Calu3 (cell line): ENCODE measurements at regions of chr19 and their contacts with region 1.

Region 1: DNA sequence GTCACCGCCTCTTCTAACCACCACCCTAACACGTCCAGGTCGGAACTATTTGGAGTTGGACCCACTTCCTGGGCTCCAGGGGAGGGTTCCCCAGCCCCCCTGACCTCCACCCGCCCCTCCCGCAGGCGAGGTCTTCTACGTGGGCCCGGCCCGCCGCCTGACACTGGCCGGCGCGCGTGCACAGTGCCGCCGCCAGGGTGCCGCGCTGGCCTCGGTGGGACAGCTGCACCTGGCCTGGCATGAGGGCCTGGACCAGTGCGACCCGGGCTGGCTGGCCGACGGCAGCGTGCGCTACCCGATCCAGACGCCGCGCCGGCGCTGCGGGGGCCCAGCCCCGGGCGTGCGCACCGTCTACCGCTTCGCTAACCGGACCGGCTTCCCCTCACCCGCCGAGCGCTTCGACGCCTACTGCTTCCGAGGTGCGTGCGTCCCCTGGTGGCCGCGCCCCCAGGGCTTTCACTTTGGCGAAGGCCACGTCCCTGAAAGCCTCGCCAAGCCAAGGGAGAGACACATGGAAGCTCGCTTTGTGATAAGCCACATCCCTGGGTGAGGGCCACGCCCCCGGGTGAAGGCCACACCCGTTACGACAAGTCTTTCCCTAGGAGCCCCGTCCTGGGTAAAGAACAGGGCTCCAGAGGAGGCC is 13.2 kb downstream of the NCAN start:
- DNase-seq: peak; percentile 81
- H3K4me3 Mint-ChIP-seq: peak overlapping the region; percentile 60
- H3K27ac Mint-ChIP-seq: no peak overlapping the region
- H3K4me1 Mint-ChIP-seq: no peaks in the 10 kb centered on the region
- H3K27me3 Mint-ChIP-seq: peaks cover 40% of the 10 kb centered on the region
- CTCF ChIP-seq: peak; percentile 79

Region 2: GRCh38 chr19:17419621-17420466 is 1805.1 kb before region 1 on chr19 and contains the start of gene MVB12A:
- CTCF ChIA-PET with region 1: interaction called, 14 read pairs
- intact Hi-C with region 1: no loop called
- DNase-seq: peak; percentile 92
- H3K4me3 Mint-ChIP-seq: peak within 1 kb of the TSS; percentile 78
- H3K27ac Mint-ChIP-seq: peak within 1 kb of the TSS; percentile 64
- H3K4me1 Mint-ChIP-seq: no peaks in the 10 kb centered on the region
- H3K27me3 Mint-ChIP-seq: no peaks in the 10 kb centered on the region
- CTCF ChIP-seq: no peak
- total RNA-seq, gene MVB12A: 35.6 and 41.1 TPM in 2 replicates

Region 3: DNA sequence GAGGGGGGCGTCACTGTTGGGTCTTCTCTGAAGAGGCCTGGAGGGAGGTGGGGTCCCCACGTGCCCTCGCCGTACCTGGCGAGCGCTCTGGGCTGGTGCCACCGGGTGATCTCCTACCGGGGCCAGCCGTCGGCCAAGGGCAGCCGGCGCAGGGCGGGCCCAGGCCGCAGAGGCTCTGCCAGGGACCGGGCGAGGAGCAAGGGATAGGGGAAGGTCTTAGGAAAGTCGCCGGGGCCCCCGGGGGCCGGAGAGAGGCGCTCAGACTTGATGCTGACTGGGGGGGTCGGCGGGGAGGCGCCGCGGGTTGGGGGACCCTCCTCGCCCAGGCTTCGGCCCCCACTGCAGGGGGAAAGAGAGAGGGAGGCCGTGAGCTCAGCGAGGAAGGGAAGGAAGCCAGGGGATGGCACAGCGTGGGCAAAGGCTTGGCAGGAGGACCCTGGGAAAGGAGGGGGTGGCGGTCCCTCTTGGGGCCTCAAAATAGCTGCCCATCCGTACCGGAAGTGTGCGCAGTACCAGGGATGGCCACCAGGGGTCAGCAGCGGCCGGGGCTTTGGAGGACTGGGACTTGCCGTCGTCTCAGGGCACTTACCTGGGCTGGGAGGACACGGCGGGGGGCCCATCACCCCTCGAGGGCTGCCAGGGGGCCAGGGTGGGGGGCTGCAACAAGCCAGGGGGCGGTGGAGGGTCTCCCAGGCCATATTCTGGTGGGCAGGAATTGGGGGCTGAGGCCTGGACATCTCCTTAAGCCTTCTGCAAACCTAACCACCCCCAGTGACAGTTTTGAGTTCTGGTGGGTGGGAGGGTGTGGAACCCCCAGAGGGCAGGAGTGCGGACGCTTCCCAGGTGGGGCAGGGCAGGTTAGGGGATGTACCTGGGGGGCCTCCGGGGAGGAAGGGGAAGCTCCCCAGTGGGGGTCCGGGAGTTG is 79.0 kb before region 1 on chr19:
- CTCF ChIA-PET with region 1: interaction called, 4 read pairs
- intact Hi-C with region 1: loop called (anchors 10 kb)
- DNase-seq: peak; percentile 84
- H3K4me3 Mint-ChIP-seq: no peak overlapping the region
- H3K27ac Mint-ChIP-seq: no peak overlapping the region
- H3K4me1 Mint-ChIP-seq: no peaks in the 10 kb centered on the region
- H3K27me3 Mint-ChIP-seq: no peaks in the 10 kb centered on the region
- CTCF ChIP-seq: peak; percentile 67

Region 4: DNA sequence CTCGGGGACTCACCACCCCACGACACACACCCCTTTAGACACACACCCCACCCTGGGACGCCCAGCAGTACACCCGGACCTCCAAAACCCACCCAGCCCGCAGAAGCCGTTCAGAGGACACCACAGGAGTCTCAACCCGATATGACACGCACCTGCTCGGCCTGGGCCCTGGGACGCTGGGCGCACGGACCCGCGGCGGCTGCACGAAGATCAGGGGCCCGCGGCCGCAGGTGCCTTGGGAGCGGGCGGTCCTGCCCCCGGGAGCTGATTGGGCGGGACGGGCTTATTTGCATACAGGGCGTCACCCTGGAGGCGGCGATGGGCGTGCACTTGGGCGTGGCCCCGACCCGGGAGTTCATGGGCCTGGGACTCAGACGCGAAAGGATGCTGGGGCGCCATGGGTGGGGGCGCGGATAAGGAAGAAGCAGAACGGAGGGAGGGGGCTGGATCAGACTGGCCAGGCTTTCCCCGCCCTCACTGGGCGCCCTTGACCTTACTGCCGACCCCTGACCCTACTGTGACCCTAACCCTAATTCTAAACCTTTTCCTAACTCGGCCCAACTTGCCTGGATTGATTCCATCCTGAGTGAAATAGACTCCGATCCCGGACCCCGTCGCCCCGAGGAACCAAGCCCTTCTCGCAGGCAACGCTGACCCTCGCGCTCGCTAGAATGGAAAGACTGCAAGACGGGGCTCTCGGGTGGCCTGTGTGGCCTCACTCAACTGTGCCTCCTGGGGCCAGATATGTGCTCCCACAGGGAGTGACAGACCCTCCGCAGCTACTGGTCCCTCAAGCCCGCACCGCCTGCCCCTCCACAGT is 54.7 kb before region 1 on chr19 and contains the start of gene MEF2B:
- CTCF ChIA-PET with region 1: interaction called, 10 read pairs
- intact Hi-C with region 1: no loop called
- DNase-seq: peak; percentile 84
- H3K4me3 Mint-ChIP-seq: peak within 1 kb of the TSS; percentile 61
- H3K27ac Mint-ChIP-seq: no peak within 1 kb of the TSS
- H3K4me1 Mint-ChIP-seq: no peaks in the 10 kb centered on the region
- H3K27me3 Mint-ChIP-seq: no peaks in the 10 kb centered on the region
- CTCF ChIP-seq: no peak
- total RNA-seq, gene MEF2B: 1.7 and 2.3 TPM in 2 replicates

Region 5: DNA sequence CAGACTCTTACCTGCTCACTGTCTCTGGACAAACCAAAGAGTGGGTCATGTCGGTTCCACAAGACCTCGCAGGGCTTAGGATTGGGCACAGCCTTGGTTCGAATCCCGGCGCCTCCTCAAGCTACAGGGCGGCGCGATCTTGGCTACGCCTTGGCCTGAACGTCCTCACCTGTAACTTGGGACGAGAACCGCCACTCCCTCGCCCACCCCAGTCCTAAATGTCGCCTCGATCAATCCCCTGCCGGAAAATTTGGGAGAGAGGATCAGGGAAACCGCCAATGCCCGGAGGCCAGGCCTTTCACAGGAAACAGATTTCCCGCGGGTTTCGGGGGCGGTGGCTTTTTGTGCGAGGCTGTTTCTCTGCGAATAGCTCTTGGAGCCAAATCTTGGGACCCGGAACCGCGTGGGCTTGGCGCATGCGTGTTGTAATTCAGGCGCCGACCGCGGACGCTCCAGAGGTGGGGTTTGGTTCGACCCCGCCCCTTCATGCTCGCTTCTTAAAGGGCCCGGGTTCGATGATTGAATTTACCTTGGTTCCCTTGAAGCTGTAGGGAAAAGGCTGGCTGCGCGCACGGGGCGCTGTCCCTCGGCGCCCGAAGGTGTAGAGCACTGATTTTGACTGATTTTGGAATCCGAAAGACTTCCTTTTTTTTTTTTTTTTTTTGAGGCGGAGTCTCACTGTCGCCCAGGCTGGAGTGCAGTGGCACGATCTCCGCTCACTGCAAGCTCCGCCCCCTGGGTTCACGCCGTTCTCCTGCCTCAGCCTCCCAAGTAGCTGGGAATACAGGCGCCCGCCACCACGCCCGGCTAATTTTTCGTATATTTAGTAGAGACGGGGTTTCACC is 21.7 kb before region 1 on chr19 and contains the start of gene NR2C2AP:
- CTCF ChIA-PET with region 1: interaction called, 10 read pairs
- intact Hi-C with region 1: no loop called
- DNase-seq: peak; percentile 84
- H3K4me3 Mint-ChIP-seq: peak within 1 kb of the TSS; percentile 82
- H3K27ac Mint-ChIP-seq: peak within 1 kb of the TSS; percentile 47
- H3K4me1 Mint-ChIP-seq: no peaks in the 10 kb centered on the region
- H3K27me3 Mint-ChIP-seq: peaks cover 22% of the 10 kb centered on the region
- CTCF ChIP-seq: no peak
- total RNA-seq, gene NR2C2AP: 20.6 and 23.2 TPM in 2 replicates